AG04449 (cell line): ENCODE measurements at regions of chr10 and their contacts with region 1.

Region 1: GRCh38 chr10:3043512-3044368 is 23.6 kb upstream of the PFKP start:
- DNase-seq: no peak
- H3K4me3 ChIP-seq: no peak overlapping the region
- CTCF ChIP-seq: peak; percentile 78

Region 2: GRCh38 chr10:1109795-1110673 is 1933.7 kb before region 1 on chr10:
- CTCF ChIA-PET with region 1: interaction called, 37 read pairs
- POLR2A ChIA-PET with region 1: no interaction called
- DNase-seq: peak; percentile 49
- H3K4me3 ChIP-seq: no peak overlapping the region
- CTCF ChIP-seq: peak; percentile 84

Region 3: GRCh38 chr10:2094171-2094570 is 949.6 kb before region 1 on chr10:
- CTCF ChIA-PET with region 1: no interaction called
- POLR2A ChIA-PET with region 1: no interaction called
- DNase-seq: no peak
- H3K4me3 ChIP-seq: no peak overlapping the region
- CTCF ChIP-seq: no peak

Region 4: GRCh38 chr10:2920637-2921036 is 123.1 kb before region 1 on chr10:
- CTCF ChIA-PET with region 1: interaction called, 258 read pairs
- POLR2A ChIA-PET with region 1: no interaction called
- DNase-seq: no peak
- H3K4me3 ChIP-seq: no peak overlapping the region
- CTCF ChIP-seq: no peak

Region 5: GRCh38 chr10:2938869-2939268 is 104.9 kb before region 1 on chr10:
- CTCF ChIA-PET with region 1: interaction called, 258 read pairs
- POLR2A ChIA-PET with region 1: no interaction called
- DNase-seq: no peak
- H3K4me3 ChIP-seq: no peak overlapping the region
- CTCF ChIP-seq: no peak

Region 6: GRCh38 chr10:2978111-2978510 is 65.6 kb before region 1 on chr10:
- CTCF ChIA-PET with region 1: interaction called, 30 read pairs
- POLR2A ChIA-PET with region 1: no interaction called
- DNase-seq: no peak
- H3K4me3 ChIP-seq: no peak overlapping the region
- CTCF ChIP-seq: peak; percentile 47

Region 7: DNA sequence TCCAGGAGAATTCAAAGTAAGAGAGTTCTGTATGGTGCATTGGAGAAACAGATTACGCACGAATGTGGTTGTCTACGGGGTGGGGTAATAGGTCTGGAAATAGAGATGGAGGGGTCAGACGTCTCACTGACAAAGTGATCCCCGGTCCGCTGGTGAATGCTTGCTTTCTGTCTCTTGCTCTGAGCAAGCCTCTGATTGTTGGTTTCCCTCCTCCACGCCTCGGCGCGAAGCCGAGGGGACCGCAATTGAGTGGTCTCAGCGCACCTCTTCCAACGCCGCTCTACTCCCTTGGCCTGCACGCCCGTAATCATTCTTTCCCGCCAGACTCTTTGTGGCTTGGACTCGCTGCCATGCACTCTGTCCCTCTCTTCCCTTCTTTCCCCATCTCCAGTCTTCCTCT is 22.9 kb before region 1 on chr10:
- CTCF ChIA-PET with region 1: interaction called, 10 read pairs
- POLR2A ChIA-PET with region 1: no interaction called
- DNase-seq: no peak
- H3K4me3 ChIP-seq: no peak overlapping the region
- CTCF ChIP-seq: no peak

Region 8: GRCh38 chr10:3310016-3310784 is 266.5 kb after region 1 on chr10:
- CTCF ChIA-PET with region 1: no interaction called
- POLR2A ChIA-PET with region 1: no interaction called
- DNase-seq: no peak
- H3K4me3 ChIP-seq: no peak overlapping the region
- CTCF ChIP-seq: no peak